Posterior vena cava (tissue), 2 donors: ENCODE measurements at regions of chr1 and their contacts with region 1.

Region 1: DNA sequence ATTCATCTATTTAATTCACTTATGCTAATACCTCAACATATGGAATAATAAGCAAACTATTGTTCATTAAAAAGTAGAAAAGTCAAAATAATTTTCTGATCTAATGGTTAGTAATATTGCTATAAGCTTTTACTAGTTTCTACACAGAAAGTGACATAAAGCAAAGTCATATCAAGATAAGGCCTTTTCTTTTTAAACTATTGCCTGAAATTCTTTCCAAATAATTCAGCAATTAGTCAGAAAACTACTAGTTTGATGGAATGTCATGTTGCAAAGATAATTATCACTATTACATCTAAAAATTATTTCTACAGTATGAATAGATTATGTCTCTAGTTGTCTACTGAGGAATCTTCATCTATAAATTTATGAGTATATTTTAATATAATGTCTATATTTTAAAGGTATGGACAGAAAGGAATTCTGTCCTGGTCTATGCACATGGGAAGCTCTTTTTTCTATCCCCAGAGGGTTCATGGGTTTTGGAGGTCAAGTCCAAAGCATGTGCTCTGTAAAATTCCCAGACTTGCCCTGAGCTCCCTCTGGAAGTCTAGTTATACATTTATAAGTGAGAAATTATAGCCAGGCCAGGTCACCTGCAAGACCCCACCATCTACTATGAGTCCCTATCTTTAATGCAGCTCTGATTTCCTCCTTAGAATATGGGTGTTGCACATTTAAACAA is 84.6 kb upstream of the DPYD start:
- DNase-seq: no peak

Region 2: GRCh38 chr1:97960470-97960869 is 45.0 kb before region 1 on chr1:
- intact Hi-C with region 1: no loop called
- DNase-seq: no peak

Region 3: DNA sequence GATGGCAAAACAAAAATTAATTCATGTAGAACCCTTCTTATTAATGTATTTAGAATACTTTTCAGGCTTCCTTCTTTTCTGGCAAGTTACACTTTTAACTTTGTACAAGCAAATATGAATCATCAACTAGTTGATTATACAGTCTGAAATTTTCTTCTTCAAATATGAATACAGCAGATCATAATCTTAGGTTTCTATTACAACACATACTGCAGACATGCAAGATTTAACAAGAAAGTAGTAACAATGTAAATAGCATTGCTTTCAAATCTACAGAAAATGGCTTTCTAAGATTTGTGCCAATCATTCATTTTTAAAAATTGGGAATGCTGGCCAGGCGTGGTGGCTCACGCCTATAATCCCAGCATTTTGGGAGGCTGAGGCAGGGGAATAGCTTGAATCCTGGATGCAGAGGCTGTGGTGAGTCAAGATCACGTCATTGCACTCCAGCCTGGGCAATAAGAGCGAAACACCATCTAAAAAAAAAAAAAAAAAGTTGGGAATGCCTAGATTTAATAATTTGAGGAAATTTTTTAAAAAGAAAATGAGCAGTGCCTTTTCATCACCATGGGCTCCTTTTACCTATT is 16.3 kb before region 1 on chr1:
- intact Hi-C with region 1: loop called in 1 of 2 experiments (anchors 1 kb)
- DNase-seq: no peak